GM12878 (cell line): ENCODE measurements at regions of chr18 and their contacts with region 1.

Region 1: DNA sequence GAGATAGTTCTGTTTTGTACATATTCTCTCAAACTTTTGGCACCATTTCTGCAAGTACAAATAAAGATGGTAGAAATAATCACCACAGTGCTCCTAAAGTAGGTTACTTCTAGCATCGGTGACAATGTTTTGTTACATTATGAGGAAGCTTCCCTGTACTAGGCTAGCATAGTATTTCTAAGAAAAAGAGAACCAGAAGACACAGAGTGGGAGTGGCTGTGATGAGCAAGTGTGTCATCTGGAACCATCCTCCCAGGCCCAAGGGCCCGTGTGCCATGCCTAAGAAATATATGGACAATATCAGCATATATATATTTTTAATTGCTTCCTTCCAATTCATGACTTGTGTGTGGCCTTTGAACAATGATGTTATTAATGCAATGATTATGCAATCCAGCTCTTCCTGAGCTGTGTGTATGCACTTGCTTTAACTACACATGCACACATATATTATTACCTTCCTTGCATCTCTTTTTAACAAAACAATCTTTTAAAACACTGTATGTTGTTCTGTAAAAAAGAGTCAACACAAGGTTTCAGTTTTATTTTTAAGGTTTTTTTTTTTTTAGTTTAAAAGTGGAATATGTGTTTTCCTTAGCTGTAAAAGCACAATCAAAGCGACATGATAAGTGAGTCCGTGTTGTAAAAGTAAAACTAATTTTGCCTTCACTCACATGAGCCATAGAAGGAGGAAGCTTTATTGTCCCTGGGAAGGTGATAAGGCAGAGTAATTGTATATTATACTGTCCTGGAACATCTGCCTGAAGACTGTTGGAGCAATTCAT is 303.9 kb downstream of the ZNF407 start:
- DNase-seq: no peak
- ATAC-seq: no peak
- H3K4me3 ChIP-seq: no peak overlapping the region
- H3K27ac ChIP-seq: no peak overlapping the region
- H3K4me1 ChIP-seq: no peaks in the 10 kb centered on the region
- H3K27me3 ChIP-seq: no peaks in the 10 kb centered on the region
- CTCF ChIP-seq: no peak
- EP300 ChIP-seq: no peak
- POLR2A ChIP-seq: no peak
- RAD21 ChIP-seq: no peak

Region 2: GRCh38 chr18:74856928-74857327 is 44.6 kb before region 1 on chr18:
- CTCF ChIA-PET with region 1: no interaction called
- POLR2A ChIA-PET with region 1: no interaction called
- RAD21 ChIA-PET with region 1: no interaction called
- SMC1A ChIA-PET with region 1: no interaction called
- in situ Hi-C with region 1: loop called (anchors 5 kb)
- intact Hi-C with region 1: no loop called
- DNase-seq: no peak
- ATAC-seq: no peak
- H3K4me3 ChIP-seq: no peak overlapping the region
- H3K27ac ChIP-seq: no peak overlapping the region
- H3K4me1 ChIP-seq: no peaks in the 10 kb centered on the region
- H3K27me3 ChIP-seq: no peaks in the 10 kb centered on the region
- CTCF ChIP-seq: no peak
- EP300 ChIP-seq: no peak
- POLR2A ChIP-seq: no peak
- RAD21 ChIP-seq: no peak

Region 3: DNA sequence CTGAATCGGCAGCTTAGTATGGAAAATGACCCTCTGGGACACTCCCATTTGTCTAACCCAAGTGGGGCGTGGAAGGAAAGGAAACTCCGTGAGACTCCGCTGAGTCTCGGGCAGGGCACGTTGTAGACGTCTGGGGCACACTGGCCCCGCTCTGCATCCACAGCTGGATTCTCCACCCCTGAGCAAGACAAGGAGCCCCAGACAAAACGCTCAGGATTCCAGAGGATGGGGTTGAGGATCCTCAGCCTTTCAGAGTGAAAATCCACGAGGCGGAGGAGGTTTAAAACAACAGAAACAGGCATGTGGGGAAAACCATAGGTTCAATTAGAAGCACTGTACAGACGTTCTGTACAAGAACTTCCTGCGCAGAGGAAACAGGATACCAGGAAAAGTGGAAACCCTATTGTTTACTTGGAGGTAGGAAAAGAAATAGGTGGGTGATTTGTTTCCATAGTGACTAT is 1795.9 kb after region 1 on chr18:
- CTCF ChIA-PET with region 1: no interaction called
- POLR2A ChIA-PET with region 1: no interaction called
- RAD21 ChIA-PET with region 1: no interaction called
- SMC1A ChIA-PET with region 1: no interaction called
- in situ Hi-C with region 1: no loop called
- intact Hi-C with region 1: no loop called
- DNase-seq: no peak
- ATAC-seq: no peak
- H3K4me3 ChIP-seq: no peak overlapping the region
- H3K27ac ChIP-seq: no peak overlapping the region
- H3K4me1 ChIP-seq: no peaks in the 10 kb centered on the region
- H3K27me3 ChIP-seq: no peaks in the 10 kb centered on the region; a peak in 1 of 4 replicates
- CTCF ChIP-seq: no peak
- EP300 ChIP-seq: no peak
- POLR2A ChIP-seq: no peak
- RAD21 ChIP-seq: no peak